ENCODE measurements at regions of chr19 and their contacts with region 1.

Region 1: DNA sequence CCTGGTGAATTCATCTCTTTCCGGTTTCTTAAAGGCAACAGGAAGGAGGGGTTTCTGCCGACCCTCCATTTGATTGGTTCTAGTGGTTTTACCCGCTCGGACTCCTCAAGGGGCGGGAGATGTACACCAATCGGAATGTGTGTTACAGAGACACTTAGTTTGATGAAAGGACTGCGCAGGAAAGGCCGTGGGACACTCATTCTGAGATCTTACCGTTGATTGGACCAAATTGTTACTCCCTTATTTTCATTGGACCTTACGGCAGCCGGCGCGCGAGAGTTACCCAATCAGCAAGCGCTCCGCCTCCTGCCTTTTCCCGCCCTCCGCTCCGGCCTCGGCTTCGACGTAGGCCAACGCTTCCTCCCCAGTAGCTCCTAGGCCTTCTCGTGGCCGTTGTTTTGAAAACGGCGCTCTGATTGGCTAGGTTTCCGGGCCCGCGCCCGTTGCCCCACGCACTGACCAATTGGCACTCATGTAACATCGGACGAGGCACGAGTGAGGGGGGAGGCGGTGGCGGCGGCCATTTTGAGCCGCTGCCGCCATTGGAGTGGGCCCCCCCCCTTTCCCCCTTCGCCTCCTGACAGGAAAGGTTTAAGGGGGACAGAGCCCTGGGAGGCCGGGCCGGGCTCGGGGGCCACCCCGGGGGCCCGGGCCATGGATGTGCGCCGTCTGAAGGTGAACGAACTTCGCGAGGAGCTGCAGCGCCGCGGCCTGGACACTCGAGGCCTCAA is at the start of gene HNRNPUL1:
- DNase-seq: peak; percentile 99
- H3K4me3 Mint-ChIP-seq: peak within 1 kb of the TSS; percentile 91
- H3K27ac Mint-ChIP-seq: peak within 1 kb of the TSS; percentile 99
- H3K4me1 Mint-ChIP-seq: peaks cover 28% of the 10 kb centered on the region
- H3K27me3 Mint-ChIP-seq: no peaks in the 10 kb centered on the region
- total RNA-seq, gene HNRNPUL1: 298 to 301 TPM

Region 2: DNA sequence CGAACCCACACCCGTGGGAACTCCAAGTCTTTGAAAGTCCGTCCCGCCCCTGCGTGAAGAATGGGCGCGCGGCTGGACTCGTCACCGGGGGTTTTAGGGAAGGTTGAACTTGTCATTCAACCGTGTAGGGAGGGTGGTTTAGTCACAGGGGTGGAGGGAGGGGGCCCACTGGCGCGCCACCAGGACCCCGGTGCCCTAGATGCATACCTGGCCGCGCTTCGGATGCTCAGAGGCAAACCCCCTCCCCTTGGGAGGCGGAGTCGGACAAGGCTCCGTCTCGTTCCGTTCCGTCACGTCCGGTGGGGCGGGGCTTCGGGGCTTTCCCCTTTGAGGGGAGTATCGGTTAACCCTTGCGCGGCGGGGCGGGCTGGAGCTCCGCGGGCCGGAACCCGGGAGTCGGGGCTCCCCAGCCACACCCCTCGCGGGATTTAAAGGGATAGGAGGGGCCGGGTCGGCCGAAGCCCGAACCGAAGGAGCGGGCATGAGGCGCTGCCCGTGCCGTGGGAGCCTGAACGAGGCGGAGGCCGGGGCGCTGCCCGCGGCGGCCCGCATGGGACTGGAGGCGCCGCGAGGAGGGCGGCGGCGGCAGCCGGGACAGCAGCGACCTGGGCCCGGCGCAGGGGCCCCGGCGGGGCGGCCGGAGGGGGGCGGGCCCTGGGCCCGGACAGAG is 547.2 kb before region 1 on chr19 and contains the starts of genes COQ8B and ITPKC:
- CTCF ChIA-PET with region 1: no interaction called
- intact Hi-C with region 1: loop called (anchors 2 kb)
- DNase-seq: peak; percentile 100
- H3K4me3 Mint-ChIP-seq: peak within 1 kb of the TSS; percentile 95
- H3K27ac Mint-ChIP-seq: peak within 1 kb of the TSS; percentile 97
- H3K4me1 Mint-ChIP-seq: peaks cover 54% of the 10 kb centered on the region
- H3K27me3 Mint-ChIP-seq: no peaks in the 10 kb centered on the region
- total RNA-seq, gene COQ8B: 19.8 to 21.3 TPM
- total RNA-seq, gene ITPKC: 4.4 to 4.7 TPM

Region 3: DNA sequence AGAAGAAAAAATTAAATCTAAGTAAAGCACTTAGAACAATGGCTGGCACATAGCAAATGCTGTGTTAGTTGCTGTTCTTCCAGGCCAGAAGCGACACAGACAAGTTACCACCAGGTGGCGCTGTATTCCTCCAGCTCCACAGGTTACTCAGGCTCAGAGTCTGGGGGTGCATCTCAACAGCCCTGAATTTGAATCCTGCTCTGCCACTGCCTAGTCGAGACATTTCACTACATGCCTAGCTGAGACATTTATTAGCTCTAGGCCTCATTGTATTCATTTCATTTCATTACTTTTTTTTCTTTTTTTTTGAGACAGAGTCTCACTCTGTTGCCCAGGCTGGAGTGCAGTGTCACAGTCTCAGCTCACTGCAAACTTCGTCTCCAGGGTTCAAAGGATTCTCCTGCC is 289.4 kb before region 1 on chr19:
- CTCF ChIA-PET with region 1: interaction called, 3 read pairs
- intact Hi-C with region 1: loop called (anchors 2 kb)
- DNase-seq: peak; percentile 90
- H3K4me3 Mint-ChIP-seq: no peak overlapping the region
- H3K27ac Mint-ChIP-seq: no peak overlapping the region
- H3K4me1 Mint-ChIP-seq: peaks cover 23% of the 10 kb centered on the region
- H3K27me3 Mint-ChIP-seq: peaks cover 4% of the 10 kb centered on the region

Region 4: DNA sequence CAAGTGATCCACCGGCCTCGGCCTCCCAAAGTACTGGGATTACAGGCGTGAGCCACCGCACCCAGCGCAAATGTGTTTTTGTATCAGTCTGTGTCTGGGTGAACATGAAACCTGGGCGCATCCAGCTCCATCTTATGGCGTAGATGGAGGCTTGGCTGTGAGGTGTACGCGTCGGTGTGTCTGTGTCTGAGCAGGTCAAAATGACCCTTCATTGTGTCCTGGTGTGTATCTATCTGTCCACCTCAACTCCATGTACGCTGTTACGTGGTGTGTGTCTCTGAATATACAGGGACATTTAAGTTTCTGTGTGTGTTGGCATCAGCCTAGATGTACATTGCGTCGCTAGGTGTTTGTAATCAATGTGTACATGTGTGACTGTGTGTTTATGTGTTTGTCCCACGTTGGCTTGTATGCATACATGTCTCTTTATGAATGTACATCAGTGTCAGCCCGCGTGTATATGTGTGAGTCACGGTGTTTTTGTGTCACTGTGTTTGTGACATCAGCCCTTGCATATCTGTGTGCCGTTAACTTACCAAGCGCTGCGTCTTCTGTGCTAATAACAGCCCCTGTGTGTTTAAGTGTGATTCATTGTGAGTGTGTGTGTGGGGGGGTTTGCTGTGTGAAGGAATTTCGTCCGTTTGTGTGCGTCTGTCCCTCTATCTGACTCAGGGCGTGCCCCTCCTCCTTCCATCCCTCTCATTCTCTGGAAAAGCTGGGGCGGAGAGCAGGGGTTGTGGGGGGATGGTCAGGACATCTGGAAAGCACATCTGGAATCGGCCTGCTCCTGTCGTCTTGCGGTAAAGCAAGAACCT is 38.6 kb before region 1 on chr19:
- CTCF ChIA-PET with region 1: interaction called, 5 read pairs
- intact Hi-C with region 1: loop called (anchors 1 kb)
- DNase-seq: peak; percentile 64
- H3K4me3 Mint-ChIP-seq: peak overlapping the region; percentile 59
- H3K27ac Mint-ChIP-seq: peak overlapping the region; percentile 55
- H3K4me1 Mint-ChIP-seq: peaks cover 17% of the 10 kb centered on the region
- H3K27me3 Mint-ChIP-seq: peaks cover 4% of the 10 kb centered on the region

Region 5: GRCh38 chr19:41327576-41328156 is 63.7 kb after region 1 on chr19:
- CTCF ChIA-PET with region 1: no interaction called
- intact Hi-C with region 1: loop called (anchors 1 kb)
- DNase-seq: peak; percentile 80
- H3K4me3 Mint-ChIP-seq: peak overlapping the region; percentile 67
- H3K27ac Mint-ChIP-seq: peak overlapping the region; percentile 93
- H3K4me1 Mint-ChIP-seq: peaks cover 55% of the 10 kb centered on the region
- H3K27me3 Mint-ChIP-seq: no peaks in the 10 kb centered on the region

Region 6: DNA sequence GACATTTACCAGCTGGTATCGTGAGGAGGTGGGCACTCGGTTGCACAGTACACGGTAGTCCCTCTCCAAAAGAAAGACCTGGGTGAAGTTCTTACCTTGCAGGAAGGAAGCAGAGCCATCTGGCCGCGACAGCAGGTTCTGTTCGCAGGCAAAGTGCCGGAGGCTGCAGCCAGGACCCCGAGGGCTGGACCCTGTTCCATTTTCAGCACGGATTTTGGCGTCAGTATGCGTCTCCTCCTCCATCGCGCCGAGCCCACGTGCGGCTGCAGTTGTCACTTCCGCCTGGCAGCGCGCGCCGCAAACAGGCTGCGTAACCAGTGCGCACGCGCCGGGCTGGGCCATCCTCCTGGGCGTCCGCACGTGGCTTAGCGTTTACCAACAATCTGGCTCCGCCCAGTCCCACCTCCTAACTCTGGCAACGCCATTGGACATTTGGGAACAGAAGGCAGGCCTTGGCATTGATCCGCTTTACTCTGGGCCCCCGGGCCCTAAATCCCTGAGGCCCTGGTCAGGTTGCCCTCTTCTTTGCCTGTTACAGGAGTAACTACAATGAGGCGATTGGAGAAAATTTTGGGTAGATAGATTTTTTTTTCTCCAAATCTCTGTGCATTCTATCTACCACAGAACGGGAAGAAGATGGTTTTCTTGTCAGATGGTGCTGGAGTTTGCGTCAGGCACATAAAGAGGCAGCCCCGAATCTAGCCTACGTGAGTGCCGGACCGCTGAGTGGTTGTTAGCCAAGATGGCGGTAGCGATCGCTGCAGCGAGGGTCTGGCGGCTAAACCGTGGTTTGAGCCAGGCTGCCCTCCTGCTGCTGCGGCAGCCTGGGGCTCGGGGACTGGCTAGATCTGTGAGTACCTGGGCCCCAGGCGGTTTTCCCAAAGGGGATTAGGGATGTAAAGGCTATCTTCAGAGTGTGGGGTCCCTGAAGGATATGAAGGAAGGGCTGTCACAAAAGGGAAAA is 133.4 kb after region 1 on chr19 and contains the starts of genes BCKDHA and EXOSC5:
- CTCF ChIA-PET with region 1: no interaction called
- intact Hi-C with region 1: loop called (anchors 1 kb)
- DNase-seq: peak; percentile 100
- H3K4me3 Mint-ChIP-seq: peak within 1 kb of the TSS; percentile 97
- H3K27ac Mint-ChIP-seq: peak within 1 kb of the TSS; percentile 98
- H3K4me1 Mint-ChIP-seq: peaks cover 37% of the 10 kb centered on the region
- H3K27me3 Mint-ChIP-seq: no peaks in the 10 kb centered on the region
- total RNA-seq, gene BCKDHA: 18.2 to 21.7 TPM
- total RNA-seq, gene EXOSC5: 47.5 to 51.7 TPM

Region 7: GRCh38 chr19:41548954-41549688 is 285.1 kb after region 1 on chr19:
- CTCF ChIA-PET with region 1: interaction called, 4 read pairs
- intact Hi-C with region 1: loop called (anchors 2 kb)
- DNase-seq: peak; percentile 90
- H3K4me3 Mint-ChIP-seq: peak overlapping the region; percentile 99
- H3K27ac Mint-ChIP-seq: peak overlapping the region; percentile 100
- H3K4me1 Mint-ChIP-seq: peaks cover 57% of the 10 kb centered on the region
- H3K27me3 Mint-ChIP-seq: no peaks in the 10 kb centered on the region

Measured in activated naive CD4-positive, alpha-beta T cell treated with anti-CD3 and anti-CD28 coated beads for 36 hours (primary cell).